Mammary epithelial cell (primary cell): ENCODE measurements at regions of chr2 and their contacts with region 1.

Region 1: DNA sequence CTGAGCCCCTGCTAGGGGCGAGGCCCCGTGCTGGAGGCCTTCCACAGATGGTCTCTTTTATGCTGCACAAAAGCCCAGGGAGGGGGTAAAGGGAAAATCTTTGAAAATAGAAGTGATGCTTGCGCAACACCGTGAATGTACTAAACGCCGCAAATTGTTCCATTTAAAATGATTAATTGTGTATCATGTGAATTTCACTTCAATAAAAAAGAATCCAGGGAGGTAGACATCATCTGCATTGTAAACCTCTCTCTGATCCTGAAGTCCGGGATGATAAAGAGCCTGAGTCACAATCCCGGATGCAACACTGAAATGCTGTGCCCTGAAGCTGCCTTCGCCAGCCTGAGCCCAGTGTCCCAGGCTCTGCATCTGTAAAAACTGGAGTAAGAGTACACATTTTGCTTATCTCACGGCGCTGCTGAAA is 107.7 kb upstream of the PPP1CB start:
- DNase-seq: peak; percentile 93
- H3K4me3 ChIP-seq: no peak overlapping the region
- H3K27ac ChIP-seq: peak overlapping the region; percentile 96
- H3K4me1 ChIP-seq: peaks cover 40% of the 10 kb centered on the region
- H3K27me3 ChIP-seq: no peaks in the 10 kb centered on the region
- CTCF ChIP-seq: no peak

Region 2: GRCh38 chr2:28594289-28595108 is 49.4 kb before region 1 on chr2:
- CTCF ChIA-PET with region 1: interaction called, 5 read pairs
- dilution Hi-C with region 1: no loop called
- in situ Hi-C with region 1: no loop called
- intact Hi-C with region 1: loop called (anchors 1 kb)
- DNase-seq: peak; percentile 94
- H3K4me3 ChIP-seq: peak overlapping the region in 1 of 3 experiments; percentile 2
- H3K27ac ChIP-seq: peak overlapping the region; percentile 63
- H3K4me1 ChIP-seq: peaks cover 38% of the 10 kb centered on the region
- H3K27me3 ChIP-seq: no peaks in the 10 kb centered on the region
- CTCF ChIP-seq: peak; percentile 79 to 83